Mammary epithelial cell (primary cell): ENCODE measurements at regions of chr2 and their contacts with region 1.

Region 1: GRCh38 chr2:222561817-222562645 is 93.9 kb downstream of the FARSB start:
- DNase-seq: peak; percentile 39
- H3K4me3 ChIP-seq: no peak overlapping the region
- H3K27ac ChIP-seq: no peak overlapping the region
- H3K4me1 ChIP-seq: no peaks in the 10 kb centered on the region
- H3K27me3 ChIP-seq: no peaks in the 10 kb centered on the region
- CTCF ChIP-seq: peak; percentile 51 to 83

Region 2: DNA sequence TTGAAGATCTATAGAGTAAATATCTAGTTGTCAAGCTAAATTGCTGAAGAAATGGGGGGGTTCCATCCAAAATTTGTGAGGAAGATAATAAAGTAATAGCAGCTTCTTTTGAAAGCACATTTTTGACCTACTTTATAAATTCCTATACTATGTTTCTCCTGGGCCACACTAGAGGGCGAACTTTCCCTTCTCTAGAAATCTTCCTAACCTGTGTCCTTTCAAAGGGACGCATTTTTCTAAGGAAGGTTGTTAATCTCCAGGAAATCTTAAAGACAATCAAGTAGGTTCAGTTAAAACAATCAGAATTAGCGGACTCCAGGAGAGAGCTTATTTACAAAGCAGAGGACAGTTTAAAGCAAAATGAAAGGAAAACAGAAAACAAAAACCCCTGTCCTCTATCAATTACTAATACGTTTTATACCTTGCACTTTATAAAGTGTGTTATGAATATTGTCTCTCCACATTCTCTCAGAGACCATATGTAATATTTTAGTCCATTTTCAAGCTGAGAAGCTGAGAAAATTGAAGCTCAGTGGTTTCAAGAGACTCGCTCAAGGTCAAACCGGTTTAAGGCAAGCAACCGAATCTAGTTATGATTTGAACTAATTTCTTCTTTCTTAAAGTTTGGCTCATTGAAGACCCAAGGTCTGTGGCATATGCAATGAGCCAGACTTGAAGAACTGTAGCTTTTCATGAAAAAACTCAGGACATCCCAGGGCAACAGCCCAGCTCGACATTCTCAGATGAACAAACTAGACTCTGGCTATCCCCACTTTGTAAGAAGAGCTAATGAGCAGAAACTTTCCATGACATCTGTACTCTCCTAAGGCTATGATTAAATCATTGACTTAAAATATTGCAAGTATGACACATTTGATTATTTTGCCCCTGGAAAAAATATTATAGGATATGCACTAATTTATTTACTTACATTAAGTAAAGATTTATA is 536.8 kb before region 1 on chr2:
- CTCF ChIA-PET with region 1: no interaction called
- dilution Hi-C with region 1: no loop called
- in situ Hi-C with region 1: no loop called
- intact Hi-C with region 1: loop called (anchors 5 kb)
- DNase-seq: peak; percentile 14
- H3K4me3 ChIP-seq: no peak overlapping the region
- H3K27ac ChIP-seq: no peak overlapping the region
- H3K4me1 ChIP-seq: no peaks in the 10 kb centered on the region
- H3K27me3 ChIP-seq: no peaks in the 10 kb centered on the region
- CTCF ChIP-seq: peak; percentile 62 to 76

Region 3: GRCh38 chr2:222318026-222318711 is 243.9 kb before region 1 on chr2:
- CTCF ChIA-PET with region 1: interaction called, 20 read pairs
- dilution Hi-C with region 1: no loop called
- in situ Hi-C with region 1: loop called (anchors 5 to 10 kb)
- intact Hi-C with region 1: loop called (anchors 1 kb)
- DNase-seq: peak; percentile 72
- H3K4me3 ChIP-seq: peak overlapping the region; percentile 36 to 47 (median 42)
- H3K27ac ChIP-seq: no peak overlapping the region
- H3K4me1 ChIP-seq: peaks cover 16% of the 10 kb centered on the region
- H3K27me3 ChIP-seq: peaks cover 26% of the 10 kb centered on the region
- CTCF ChIP-seq: peak; percentile 37 to 67

Region 4: GRCh38 chr2:222424729-222425671 is 137.0 kb before region 1 on chr2:
- CTCF ChIA-PET with region 1: no interaction called
- dilution Hi-C with region 1: no loop called
- in situ Hi-C with region 1: no loop called
- intact Hi-C with region 1: loop called (anchors 5 kb)
- DNase-seq: no peak
- H3K4me3 ChIP-seq: peak overlapping the region; percentile 26 to 56 (median 51)
- H3K27ac ChIP-seq: no peak overlapping the region
- H3K4me1 ChIP-seq: peaks cover 5% of the 10 kb centered on the region
- H3K27me3 ChIP-seq: peaks cover 16% of the 10 kb centered on the region
- CTCF ChIP-seq: no peak

Region 5: GRCh38 chr2:222613715-222614331 is 51.8 kb after region 1 on chr2:
- CTCF ChIA-PET with region 1: interaction called, 7 read pairs
- dilution Hi-C with region 1: no loop called
- in situ Hi-C with region 1: no loop called
- intact Hi-C with region 1: loop called (anchors 2 kb)
- DNase-seq: peak; percentile 14
- H3K4me3 ChIP-seq: no peak overlapping the region
- H3K27ac ChIP-seq: no peak overlapping the region
- H3K4me1 ChIP-seq: no peaks in the 10 kb centered on the region
- H3K27me3 ChIP-seq: no peaks in the 10 kb centered on the region
- CTCF ChIP-seq: peak; percentile 72 to 78

Region 6: DNA sequence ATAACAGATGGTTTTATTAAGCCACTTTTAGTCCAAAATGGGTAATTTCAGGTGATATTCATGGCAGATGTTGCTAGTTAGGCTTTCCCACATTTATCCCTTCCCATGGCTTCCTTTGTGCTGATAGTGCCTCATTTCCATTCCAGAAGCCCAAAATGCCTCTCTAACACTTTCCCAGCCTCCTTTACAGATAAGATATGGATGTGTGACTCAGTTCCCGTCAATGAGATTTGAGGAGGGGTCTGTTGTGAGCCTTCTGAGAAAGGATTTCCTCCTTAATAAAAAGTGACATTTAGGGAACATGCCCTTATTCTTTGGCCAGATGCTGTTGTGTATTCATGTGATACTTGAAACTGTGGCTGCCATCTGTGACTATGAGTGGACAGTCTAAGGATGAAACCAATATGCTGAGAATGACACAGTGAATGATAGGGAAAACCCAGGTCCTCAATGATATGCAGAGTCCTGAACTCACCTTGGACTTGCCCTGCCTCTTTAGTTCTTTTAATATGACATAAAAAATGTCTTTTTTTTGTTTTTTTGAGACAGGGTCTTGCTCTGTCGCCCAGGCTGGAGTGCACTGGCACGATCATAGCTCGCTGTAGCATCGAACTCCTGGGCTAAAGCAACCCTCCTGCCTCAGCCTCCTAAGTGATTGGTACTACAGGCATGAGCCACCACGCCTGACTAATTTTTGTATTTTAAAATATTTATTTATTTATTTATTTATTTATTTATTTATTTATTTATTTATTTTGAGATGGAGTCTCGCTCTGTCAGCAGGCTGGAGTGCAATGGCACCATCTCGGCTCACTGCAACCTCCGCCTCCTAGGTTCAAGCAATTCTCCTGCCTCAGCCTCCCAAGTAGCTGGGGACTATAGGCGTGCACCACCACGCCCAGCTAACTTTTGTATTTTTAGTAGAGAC is 293.0 kb after region 1 on chr2:
- CTCF ChIA-PET with region 1: no interaction called
- dilution Hi-C with region 1: no loop called
- in situ Hi-C with region 1: no loop called
- intact Hi-C with region 1: no loop called
- DNase-seq: no peak
- H3K4me3 ChIP-seq: no peak overlapping the region
- H3K27ac ChIP-seq: no peak overlapping the region
- H3K4me1 ChIP-seq: peaks cover 8% of the 10 kb centered on the region
- H3K27me3 ChIP-seq: no peaks in the 10 kb centered on the region
- CTCF ChIP-seq: no peak